OCI-LY7 (cell line): ENCODE measurements at regions of chr12 and their contacts with region 1.

Region 1: GRCh38 chr12:24596768-24597388 is 352.0 kb downstream of the BCAT1 start:
- DNase-seq: peak; percentile 28
- H3K4me3 ChIP-seq: no peak overlapping the region
- H3K27ac ChIP-seq: no peak overlapping the region
- H3K4me1 ChIP-seq: peaks cover 20% of the 10 kb centered on the region
- CTCF ChIP-seq: peak; percentile 84

Region 2: GRCh38 chr12:24398605-24399004 is 198.3 kb before region 1 on chr12:
- CTCF ChIA-PET with region 1: no interaction called
- POLR2A ChIA-PET with region 1: no interaction called
- intact Hi-C with region 1: no loop called
- DNase-seq: no peak
- H3K4me3 ChIP-seq: no peak overlapping the region
- H3K27ac ChIP-seq: no peak overlapping the region
- H3K4me1 ChIP-seq: no peaks in the 10 kb centered on the region
- CTCF ChIP-seq: no peak

Region 3: DNA sequence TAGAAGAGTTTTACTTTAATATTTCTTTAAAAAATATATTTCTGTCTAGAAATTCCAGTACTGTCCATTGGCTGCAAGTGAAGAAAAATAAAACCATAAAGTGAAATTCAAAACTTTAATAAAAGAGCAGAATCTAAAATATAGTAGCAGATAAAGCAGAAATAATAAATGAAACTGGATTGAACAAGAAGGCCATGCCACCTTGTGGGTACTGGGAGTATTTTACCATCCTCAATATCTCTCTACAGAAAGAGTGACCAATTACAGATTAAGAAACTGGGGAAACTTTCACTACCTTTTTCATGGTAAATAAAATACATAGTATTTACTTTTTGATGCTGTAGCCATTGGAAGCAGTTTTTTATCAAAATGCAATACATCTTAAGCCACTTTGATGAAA is 131.5 kb after region 1 on chr12:
- CTCF ChIA-PET with region 1: no interaction called
- POLR2A ChIA-PET with region 1: no interaction called
- intact Hi-C with region 1: loop called (anchors 5 kb)
- DNase-seq: peak; percentile 55
- H3K4me3 ChIP-seq: no peak overlapping the region
- H3K27ac ChIP-seq: no peak overlapping the region
- H3K4me1 ChIP-seq: peaks cover 18% of the 10 kb centered on the region
- CTCF ChIP-seq: peak; percentile 90

Region 4: GRCh38 chr12:24788886-24789285 is 192.0 kb after region 1 on chr12:
- CTCF ChIA-PET with region 1: no interaction called
- POLR2A ChIA-PET with region 1: no interaction called
- intact Hi-C with region 1: loop called (anchors 5 kb)
- DNase-seq: no peak
- H3K4me3 ChIP-seq: no peak overlapping the region
- H3K27ac ChIP-seq: no peak overlapping the region
- H3K4me1 ChIP-seq: no peaks in the 10 kb centered on the region
- CTCF ChIP-seq: no peak

Region 5: DNA sequence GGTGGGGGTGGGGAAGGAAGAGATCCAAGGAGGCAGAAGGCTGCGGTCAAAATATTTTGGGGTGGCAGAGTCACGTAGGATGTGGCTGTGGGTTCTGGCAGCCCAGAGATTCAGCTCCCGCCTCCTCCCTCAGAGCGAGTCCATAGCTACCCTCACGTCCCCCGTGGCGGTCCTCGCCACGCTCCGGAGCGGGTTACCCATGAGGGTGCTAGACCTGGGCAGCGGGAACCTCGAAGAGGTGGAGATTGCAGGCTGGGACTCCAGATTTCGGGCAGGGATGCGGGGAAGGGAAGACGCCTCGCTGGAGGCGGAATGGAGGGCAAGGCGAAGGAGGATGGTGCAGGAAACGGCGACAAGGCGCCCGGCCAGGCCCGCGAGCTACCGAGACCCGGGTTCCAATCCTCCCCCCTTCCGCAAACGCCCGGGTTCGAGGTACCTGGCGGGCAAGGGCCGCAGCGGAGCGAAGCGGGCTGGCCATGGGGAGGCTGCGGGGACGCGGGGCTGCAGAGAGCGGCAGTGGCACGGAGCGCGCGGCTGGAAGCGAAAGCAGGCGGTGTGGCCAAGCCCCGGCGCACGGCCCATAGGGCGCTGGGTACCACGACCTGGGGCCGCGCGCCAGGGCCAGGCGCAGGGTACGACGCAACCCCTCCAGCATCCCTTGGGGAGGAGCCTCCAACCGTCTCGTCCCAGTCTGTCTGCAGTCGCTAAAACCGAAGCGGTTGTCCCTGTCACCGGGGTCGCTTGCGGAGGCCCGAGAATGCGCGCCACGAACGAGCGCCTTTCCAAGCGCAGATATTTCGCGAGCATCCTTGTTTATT is 305.8 kb after region 1 on chr12:
- CTCF ChIA-PET with region 1: no interaction called
- POLR2A ChIA-PET with region 1: no interaction called
- intact Hi-C with region 1: no loop called
- DNase-seq: no peak
- H3K4me3 ChIP-seq: no peak overlapping the region
- H3K27ac ChIP-seq: no peak overlapping the region
- H3K4me1 ChIP-seq: no peaks in the 10 kb centered on the region
- CTCF ChIP-seq: no peak